ENCODE measurements at regions of chr10 and their contacts with region 1.

Region 1: DNA sequence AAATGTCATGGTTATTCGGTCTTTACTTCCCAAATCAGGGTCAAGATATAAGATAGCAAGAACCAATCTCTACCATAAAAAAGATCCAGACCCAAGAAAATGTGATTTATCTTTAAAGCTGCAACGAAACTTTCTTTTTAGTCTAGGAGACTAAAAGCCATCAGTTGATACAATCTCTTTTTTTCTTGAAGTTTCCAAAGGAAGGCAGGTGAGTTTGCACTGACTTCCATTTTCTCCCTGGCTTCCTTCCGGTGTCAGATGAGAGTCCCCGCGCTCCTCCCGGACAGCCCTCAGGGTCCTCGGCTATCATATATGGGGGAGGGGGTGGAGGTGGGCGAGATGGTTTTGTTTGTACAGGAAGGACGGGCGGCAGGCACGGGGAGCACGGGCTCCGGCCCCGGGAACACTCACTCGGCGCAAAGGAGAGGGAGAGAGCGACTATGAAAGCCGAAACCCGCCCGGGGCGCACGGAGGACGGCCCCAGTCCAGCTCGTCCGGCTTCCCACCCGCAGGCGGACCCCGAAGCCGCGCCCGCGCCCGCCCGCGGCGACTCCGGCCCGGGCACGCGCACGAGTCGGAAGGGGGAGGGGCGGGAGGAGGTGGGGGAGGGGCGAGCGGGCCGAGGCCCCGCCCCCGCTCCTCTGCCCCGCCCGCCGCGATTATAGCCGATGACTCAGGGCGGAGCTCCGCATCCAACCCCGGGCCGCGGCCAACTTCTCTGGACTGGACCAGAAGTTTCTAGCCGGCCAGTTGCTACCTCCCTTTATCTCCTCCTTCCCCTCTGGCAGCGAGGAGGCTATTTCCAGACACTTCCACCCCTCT is at the start of gene BAG3:
- DNase-seq: peak; percentile 82 to 98
- H3K4me3 ChIP-seq: peak within 1 kb of the TSS; percentile 99
- H3K27ac ChIP-seq: peak within 1 kb of the TSS; percentile 99
- H3K4me1 ChIP-seq: peaks cover 0 to 25% of the 10 kb centered on the region in 2 donors
- H3K27me3 ChIP-seq: no peaks in the 10 kb centered on the region
- CTCF ChIP-seq: no peak
- total RNA-seq, gene BAG3: 88.0 TPM

Region 2: DNA sequence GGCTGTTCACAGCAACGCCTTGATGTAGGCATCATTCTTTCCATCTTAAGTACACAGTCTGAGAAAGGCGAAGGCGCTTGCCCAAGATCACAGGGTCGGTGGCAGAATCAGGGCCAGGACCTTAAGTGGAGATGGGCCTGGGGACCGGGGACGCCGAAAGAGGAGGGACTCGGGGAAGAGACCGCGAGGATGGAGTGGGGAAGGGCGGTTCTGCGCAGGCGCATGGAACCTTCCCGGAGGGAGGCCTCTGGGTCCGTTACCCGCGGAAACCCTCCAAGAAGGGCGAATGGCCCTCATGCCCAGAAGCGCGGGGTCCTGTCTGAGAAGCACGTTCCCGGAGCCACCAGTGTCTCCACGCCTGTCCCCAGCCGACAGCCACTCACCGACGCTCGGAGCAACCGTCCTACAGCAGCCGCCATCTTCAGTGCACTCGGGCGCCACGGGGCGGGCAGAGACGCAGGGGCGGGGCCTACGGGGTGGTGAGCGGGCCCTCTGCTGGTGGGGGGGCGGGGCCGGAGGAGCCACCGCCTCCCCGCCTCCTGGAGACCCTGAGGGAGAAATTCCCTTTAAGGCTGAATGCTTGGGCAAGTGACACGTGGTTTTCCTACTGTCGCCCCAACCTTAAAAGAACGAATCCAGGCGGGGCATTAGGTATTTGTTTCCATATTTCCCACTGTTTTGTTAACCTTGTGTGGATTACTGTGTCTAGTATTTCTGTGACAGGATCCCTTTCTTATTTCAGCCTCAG is 472.4 kb before region 1 on chr10 and contains the start of gene PRDX3:
- intact Hi-C with region 1: loop called (anchors 5 kb)
- DNase-seq: peak; percentile 72 to 95
- H3K4me3 ChIP-seq: peak within 1 kb of the TSS; percentile 66 to 81
- H3K27ac ChIP-seq: peak within 1 kb of the TSS; percentile 72 to 91
- H3K4me1 ChIP-seq: peaks cover 0 to 7% of the 10 kb centered on the region in 2 donors
- H3K27me3 ChIP-seq: no peaks in the 10 kb centered on the region
- CTCF ChIP-seq: peak in 2 of 3 experiments; percentile 13 to 19
- total RNA-seq, gene PRDX3: 34.9 TPM

Region 3: DNA sequence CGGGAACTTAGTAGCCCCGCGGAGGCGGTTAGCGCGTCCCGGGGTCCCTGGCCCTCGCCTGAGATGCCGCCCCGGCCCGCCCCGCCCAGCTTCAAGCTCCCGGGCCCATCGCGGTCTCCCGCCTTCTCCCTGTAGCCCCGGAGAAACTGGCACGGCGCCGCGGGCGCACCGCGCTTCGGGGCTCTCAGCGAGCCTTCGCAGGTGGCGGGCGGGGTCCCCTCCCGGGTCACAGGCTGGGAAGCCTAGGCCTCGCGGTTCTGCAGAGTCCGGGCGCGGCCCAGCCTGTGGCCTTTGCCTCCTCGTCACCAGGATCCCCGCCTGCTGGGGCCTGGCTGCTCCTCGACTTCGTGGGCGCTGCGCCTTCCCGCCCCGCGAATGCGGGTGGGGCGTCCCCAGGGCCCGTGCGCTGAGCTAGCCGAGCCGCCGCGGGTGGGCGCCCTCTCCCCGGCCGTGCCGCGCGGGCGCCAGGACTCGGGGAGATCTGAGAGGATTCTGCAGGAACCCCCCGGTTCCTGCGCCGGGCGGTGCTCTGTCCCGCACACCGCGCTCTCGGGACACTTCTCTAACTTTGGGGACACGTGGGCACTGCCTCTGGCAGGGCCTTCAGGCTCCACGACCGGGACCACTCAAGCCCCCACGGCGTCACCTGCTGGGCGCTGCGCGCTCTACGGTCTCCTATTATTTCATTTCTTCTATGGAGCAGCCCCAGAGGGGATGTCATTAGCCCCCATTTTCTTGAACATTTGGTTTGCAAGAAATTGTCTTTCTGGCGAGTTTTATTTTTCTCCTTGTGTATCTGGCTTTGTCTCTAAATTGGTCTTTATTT is 107.7 kb before region 1 on chr10:
- intact Hi-C with region 1: loop called (anchors 5 kb)
- DNase-seq: peak in 1 of 2 donors; percentile 71
- H3K4me3 ChIP-seq: peak overlapping the region; percentile 85 to 89
- H3K27ac ChIP-seq: peak overlapping the region; percentile 58 to 79
- H3K4me1 ChIP-seq: peaks cover 0 to 10% of the 10 kb centered on the region in 2 donors
- H3K27me3 ChIP-seq: no peaks in the 10 kb centered on the region
- CTCF ChIP-seq: peak in 2 of 3 experiments; percentile 40 to 66

Region 4: GRCh38 chr10:119555178-119555784 is 95.6 kb before region 1 on chr10:
- intact Hi-C with region 1: no loop called
- DNase-seq: peak in 1 of 2 donors; percentile 4
- H3K4me3 ChIP-seq: no peak overlapping the region
- H3K27ac ChIP-seq: no peak overlapping the region
- H3K4me1 ChIP-seq: no peaks in the 10 kb centered on the region
- H3K27me3 ChIP-seq: no peaks in the 10 kb centered on the region
- CTCF ChIP-seq: no peak

Region 5: DNA sequence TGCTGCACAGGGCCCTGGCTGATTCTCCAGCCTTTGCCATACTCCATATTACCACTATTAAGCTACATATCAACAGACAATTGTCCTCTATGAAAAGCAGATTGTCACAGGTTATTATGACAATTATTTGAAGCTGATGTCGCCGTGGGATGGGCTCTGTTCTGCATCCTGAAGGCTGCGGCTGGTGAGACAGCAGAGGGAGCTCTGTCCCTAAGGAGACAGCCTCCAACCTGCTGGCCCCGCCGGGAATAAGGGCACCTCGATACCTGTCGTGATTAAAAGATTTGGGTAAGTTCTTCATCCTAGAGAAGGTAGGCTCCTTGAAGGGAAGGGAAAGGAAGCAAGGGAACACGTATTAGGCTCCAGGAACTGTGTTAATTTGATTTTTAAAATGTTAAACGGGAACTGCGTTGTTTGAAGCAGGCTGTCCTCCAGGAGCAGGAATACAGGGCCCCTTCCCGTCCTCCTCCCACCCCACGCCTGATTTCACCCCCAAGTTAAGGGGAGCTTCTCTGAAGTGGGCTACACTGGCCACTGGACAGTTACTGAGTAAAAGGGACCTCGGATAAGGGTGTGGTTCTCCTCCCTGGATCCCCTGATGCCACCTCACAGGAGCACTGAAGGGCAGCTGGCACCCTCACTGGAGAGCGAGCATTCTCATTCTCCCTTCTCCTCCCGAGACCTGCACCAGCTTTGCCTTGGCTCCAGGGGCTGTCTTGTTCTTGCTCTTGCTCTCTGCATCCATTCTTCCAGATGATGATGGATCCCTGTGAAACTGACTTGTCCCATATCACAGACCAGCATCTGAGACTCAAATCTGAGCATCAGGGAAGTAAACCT is 42.4 kb before region 1 on chr10:
- intact Hi-C with region 1: loop called (anchors 2 kb)
- DNase-seq: peak in 1 of 2 donors; percentile 67
- H3K4me3 ChIP-seq: peak overlapping the region in 1 of 2 donors; percentile 42
- H3K27ac ChIP-seq: no peak overlapping the region
- H3K4me1 ChIP-seq: no peaks in the 10 kb centered on the region
- H3K27me3 ChIP-seq: no peaks in the 10 kb centered on the region
- CTCF ChIP-seq: peak; percentile 43 to 77 (median 58)

Region 6: DNA sequence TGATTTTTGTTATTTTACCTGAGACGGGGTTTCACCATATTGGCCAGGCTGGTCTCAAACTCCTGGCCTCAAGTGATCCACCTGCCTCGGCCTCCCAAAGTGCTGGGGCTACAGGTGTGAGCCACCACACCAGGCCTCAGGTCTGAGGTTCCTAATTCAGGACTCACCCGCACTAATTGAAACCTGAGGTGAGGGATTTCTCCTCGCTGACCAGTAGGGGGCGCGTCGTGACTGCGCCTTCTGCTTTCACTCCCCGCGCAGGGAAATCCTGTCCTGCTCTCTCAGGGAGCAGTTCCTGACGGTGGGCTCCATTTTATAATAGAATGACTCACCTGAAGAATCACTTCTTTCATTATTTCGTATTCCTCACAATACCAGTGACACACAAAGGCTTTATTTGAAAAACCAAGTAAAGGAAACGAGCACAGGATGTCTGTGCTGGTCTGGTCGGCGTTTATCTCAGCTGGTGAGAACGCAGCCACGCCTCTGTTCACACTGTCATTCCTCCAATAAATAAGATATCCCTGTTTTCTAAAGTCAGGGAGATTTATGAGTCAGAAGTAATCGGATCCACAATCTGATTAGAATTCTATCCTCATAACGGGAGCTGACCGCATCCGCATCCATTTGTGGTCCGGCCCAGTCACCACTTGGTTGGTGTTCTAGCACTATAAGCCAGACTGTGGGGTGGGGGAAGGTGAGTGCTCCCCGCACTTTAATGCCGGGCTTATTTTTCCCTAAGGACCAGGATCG is 35.7 kb after region 1 on chr10:
- intact Hi-C with region 1: loop called (anchors 1 kb)
- DNase-seq: peak; percentile 43 to 86
- H3K4me3 ChIP-seq: peak overlapping the region in 1 of 2 donors; percentile 34
- H3K27ac ChIP-seq: no peak overlapping the region
- H3K4me1 ChIP-seq: peaks cover 6 to 11% of the 10 kb centered on the region in 2 donors
- H3K27me3 ChIP-seq: no peaks in the 10 kb centered on the region
- CTCF ChIP-seq: peak; percentile 90 to 96 (median 96)

Region 7: DNA sequence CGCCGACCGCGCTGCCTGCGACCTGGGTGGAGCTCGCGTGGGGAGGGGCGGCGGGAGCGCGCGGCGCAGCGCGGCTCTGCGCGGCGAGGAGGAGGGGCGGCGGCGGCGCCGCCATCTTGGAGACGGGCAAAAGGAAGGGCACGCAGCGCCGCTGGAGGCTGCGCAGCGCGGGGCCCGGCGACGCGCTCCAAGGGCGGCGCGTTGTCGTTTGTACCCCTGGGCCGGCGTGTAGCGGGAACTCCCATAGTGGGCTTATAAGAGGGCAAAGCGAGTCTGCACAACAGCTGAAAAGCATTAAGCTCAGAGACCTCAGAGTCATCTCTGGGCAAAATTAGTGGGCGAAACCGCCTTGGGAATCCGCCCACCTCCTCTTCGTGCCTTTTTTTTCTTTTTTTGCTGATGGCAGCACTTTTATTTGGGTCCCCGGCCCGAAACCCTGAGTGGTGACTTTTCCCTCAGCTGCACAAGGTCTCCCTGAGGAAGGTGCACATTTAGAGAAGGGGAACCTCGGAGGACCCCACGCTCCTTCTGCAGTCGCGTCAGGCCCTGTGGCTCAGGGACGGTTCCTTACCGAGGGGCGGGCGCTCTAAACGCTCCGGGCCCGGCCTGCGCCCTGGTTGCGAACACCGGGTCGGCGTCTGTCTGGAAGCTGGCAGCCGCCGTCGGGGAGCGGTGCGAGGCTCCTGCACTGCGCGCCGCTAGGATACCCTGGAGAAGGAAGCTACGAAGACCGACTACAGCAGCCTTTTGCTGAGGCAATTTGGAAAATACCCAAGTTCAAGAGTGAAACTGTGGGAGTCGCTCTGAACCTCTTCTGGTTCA is 222.2 kb after region 1 on chr10:
- intact Hi-C with region 1: loop called (anchors 2 kb)
- DNase-seq: peak; percentile 30 to 91
- H3K4me3 ChIP-seq: peak overlapping the region; percentile 72 to 91
- H3K27ac ChIP-seq: peak overlapping the region; percentile 85 to 90
- H3K4me1 ChIP-seq: peaks cover 0 to 18% of the 10 kb centered on the region in 2 donors
- H3K27me3 ChIP-seq: no peaks in the 10 kb centered on the region
- CTCF ChIP-seq: no peak

Measured in ascending aorta (tissue), 2 donors.